ENCODE measurements at regions of chr3 and their contacts with region 1.

Region 1: GRCh38 chr3:138834359-138835212 is at the start of gene PIK3CB:
- DNase-seq: peak; percentile 96
- H3K4me3 Mint-ChIP-seq: peak within 1 kb of the TSS; percentile 93
- H3K27ac Mint-ChIP-seq: peak within 1 kb of the TSS; percentile 93
- H3K4me1 Mint-ChIP-seq: peaks cover 20% of the 10 kb centered on the region
- H3K27me3 Mint-ChIP-seq: no peaks in the 10 kb centered on the region
- total RNA-seq, gene PIK3CB: 17.6 and 18.1 TPM in 2 replicates

Region 2: DNA sequence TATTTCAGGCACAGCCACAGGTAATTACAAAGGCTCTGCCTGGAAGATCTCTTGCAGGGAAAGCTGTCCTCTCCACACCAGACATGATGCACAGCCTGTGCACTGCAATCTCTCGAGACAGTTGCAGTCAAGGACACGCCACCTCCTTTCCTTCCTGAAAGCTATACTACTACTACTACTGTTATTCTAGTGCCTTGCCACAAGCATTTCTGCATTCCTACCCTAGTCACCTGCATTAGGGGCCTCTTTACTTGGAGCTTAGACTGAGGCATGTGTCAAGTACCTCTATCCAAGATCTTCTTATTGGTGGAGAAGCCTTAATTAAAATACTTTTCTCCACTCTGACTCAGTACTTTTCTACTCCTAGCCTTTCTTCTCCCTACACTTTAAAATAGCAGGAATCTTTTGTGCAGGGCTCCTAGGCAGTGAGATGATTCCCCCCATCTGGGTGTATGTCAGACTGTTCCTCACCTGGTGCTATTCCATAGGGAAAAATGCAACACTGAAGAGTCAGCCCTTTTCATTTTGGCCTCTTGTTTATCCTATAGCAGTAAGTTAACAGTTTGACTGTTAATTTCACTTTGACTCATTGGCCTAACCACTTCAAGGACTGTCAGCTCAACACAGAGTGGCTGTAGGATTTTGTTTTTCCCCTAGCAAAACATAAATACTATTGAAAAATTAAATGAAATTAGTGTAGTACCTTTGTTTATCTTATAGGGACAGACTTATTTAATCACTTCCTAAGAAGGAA is 321.3 kb before region 1 on chr3:
- intact Hi-C with region 1: loop called (anchors 1 kb)
- DNase-seq: peak; percentile 73
- H3K4me3 Mint-ChIP-seq: peak overlapping the region; percentile 37
- H3K27ac Mint-ChIP-seq: peak overlapping the region; percentile 80
- H3K4me1 Mint-ChIP-seq: peaks cover 24% of the 10 kb centered on the region
- H3K27me3 Mint-ChIP-seq: no peaks in the 10 kb centered on the region

Region 3: GRCh38 chr3:138717348-138717747 is 117.2 kb before region 1 on chr3:
- intact Hi-C with region 1: loop called (anchors 5 kb)
- DNase-seq: no peak
- H3K4me3 Mint-ChIP-seq: no peak overlapping the region
- H3K27ac Mint-ChIP-seq: no peak overlapping the region
- H3K4me1 Mint-ChIP-seq: peaks cover 15% of the 10 kb centered on the region
- H3K27me3 Mint-ChIP-seq: no peaks in the 10 kb centered on the region

Region 4: GRCh38 chr3:138799822-138800221 is 34.8 kb before region 1 on chr3:
- intact Hi-C with region 1: loop called (anchors 5 kb)
- DNase-seq: no peak
- H3K4me3 Mint-ChIP-seq: no peak overlapping the region
- H3K27ac Mint-ChIP-seq: no peak overlapping the region
- H3K4me1 Mint-ChIP-seq: peaks cover 19% of the 10 kb centered on the region
- H3K27me3 Mint-ChIP-seq: no peaks in the 10 kb centered on the region

Region 5: GRCh38 chr3:139343895-139344856 is 509.6 kb after region 1 on chr3 and contains the start of gene MRPS22:
- intact Hi-C with region 1: loop called (anchors 10 kb)
- DNase-seq: peak; percentile 95
- H3K4me3 Mint-ChIP-seq: peak within 1 kb of the TSS; percentile 20
- H3K27ac Mint-ChIP-seq: no peak within 1 kb of the TSS
- H3K4me1 Mint-ChIP-seq: peaks cover 13% of the 10 kb centered on the region
- H3K27me3 Mint-ChIP-seq: no peaks in the 10 kb centered on the region
- total RNA-seq, gene MRPS22: 55.8 and 59.7 TPM in 2 replicates

Measured in activated CD4-positive, alpha-beta T cell treated with anti-CD3 and anti-CD28 coated beads, Interleukin-2, amount 10 ng/mL, durations not matched to agents 24 days and 14 days (primary cell).